Calu3 (cell line): ENCODE measurements at regions of chr5 and their contacts with region 1.

Region 1: DNA sequence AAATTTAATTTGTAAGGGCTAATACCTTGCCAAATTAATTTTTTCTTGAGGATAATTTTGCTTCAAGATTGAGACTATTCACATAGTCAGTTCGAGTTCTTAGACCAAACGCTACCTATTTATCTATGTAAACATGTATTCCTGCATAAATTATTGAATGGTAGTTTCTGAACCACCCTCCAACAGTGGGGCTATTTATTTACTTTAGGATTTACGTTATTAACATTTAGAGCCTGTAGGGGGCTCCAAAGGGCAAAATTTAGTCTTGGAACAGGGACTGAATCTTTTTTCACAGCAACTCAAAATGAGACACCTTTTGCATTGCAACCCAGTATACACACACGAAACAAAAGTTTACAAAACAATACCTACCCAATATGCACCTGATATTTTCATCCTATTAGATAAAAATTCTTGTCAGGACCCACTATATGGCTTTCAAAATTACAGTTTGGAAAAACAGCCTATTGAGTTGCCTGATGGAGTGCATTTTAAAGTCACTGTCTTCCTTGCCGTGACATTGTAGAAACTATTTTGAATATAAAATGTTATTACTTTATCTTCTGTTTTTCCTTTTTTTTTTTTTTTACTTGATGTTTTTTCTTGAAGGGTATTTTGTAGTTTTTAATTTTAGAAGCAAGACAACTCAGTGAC is 47.1 kb upstream of the POU4F3 start:
- DNase-seq: peak; percentile 51
- H3K4me3 Mint-ChIP-seq: no peak overlapping the region
- H3K27ac Mint-ChIP-seq: no peak overlapping the region
- H3K4me1 Mint-ChIP-seq: no peaks in the 10 kb centered on the region
- H3K27me3 Mint-ChIP-seq: no peaks in the 10 kb centered on the region
- CTCF ChIP-seq: peak; percentile 75

Region 2: DNA sequence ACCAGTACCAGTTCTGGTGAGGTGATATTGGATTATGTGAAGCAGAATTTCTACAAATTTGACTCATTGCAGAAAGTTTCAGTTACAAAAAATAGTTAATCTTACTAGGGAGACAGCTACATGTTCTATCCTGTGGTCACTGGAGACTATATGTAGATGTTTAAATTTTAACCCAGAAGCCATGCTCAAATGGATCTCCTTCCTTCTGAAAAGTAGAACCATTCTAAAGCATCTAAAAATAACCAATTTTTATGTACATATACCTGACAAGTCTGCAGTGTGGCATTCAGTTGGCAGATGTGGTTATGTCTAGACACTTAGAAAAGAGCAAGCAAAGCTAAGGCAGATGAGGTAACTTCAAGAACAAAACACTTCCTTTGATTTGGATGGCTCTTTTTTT is 18.4 kb before region 1 on chr5:
- CTCF ChIA-PET with region 1: no interaction called
- intact Hi-C with region 1: no loop called
- DNase-seq: no peak
- H3K4me3 Mint-ChIP-seq: no peak overlapping the region
- H3K27ac Mint-ChIP-seq: no peak overlapping the region
- H3K4me1 Mint-ChIP-seq: no peaks in the 10 kb centered on the region
- H3K27me3 Mint-ChIP-seq: no peaks in the 10 kb centered on the region
- CTCF ChIP-seq: no peak

Region 3: GRCh38 chr5:146409054-146409671 is 117.6 kb after region 1 on chr5:
- CTCF ChIA-PET with region 1: no interaction called
- intact Hi-C with region 1: loop called (anchors 5 kb)
- DNase-seq: no peak
- H3K4me3 Mint-ChIP-seq: no peak overlapping the region
- H3K27ac Mint-ChIP-seq: no peak overlapping the region
- H3K4me1 Mint-ChIP-seq: no peaks in the 10 kb centered on the region
- H3K27me3 Mint-ChIP-seq: peaks cover 4% of the 10 kb centered on the region
- CTCF ChIP-seq: no peak